ENCODE measurements at regions of chr20 and their contacts with region 1.

Region 1: DNA sequence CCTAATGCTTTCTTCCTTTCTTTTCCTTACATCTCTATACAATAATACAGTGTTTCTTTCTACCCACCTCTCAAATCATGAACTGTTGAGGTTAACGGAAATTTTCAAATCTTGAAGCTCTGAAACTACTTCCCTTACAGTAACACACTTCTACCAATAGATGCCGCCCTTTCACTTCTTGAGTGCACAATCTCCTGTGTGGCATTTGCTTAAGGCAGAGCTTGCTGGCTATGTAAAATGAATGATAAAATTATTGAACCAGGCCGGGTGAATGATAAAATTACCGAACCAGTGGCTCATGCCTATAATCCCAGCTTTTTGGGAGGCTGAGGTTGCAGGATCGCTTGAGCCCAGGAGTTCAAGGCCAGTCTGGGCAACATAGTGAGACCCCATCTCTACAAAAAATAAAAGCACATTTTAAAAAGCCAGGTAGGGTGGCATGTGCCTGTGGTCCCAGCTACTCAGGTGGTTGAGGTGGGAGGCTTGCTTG is 56.8 kb downstream of the KCNS1 start:
- DNase-seq: peak; percentile 37 to 77
- H3K4me3 ChIP-seq: no peak overlapping the region
- H3K27ac ChIP-seq: no peak overlapping the region
- H3K4me1 ChIP-seq: peaks cover 26% of the 10 kb centered on the region
- H3K27me3 ChIP-seq: no peaks in the 10 kb centered on the region
- CTCF ChIP-seq: peak; percentile 96

Region 2: GRCh38 chr20:44407402-44408184 is 636.5 kb before region 1 on chr20:
- CTCF ChIA-PET with region 1: no interaction called
- POLR2A ChIA-PET with region 1: interaction called, 10 read pairs
- intact Hi-C with region 1: no loop called
- DNase-seq: peak; percentile 96 to 99
- H3K4me3 ChIP-seq: peak overlapping the region; percentile 13; the same call in 1 of the 2 replicates
- H3K27ac ChIP-seq: peak overlapping the region; percentile 75
- H3K4me1 ChIP-seq: peaks cover 35% of the 10 kb centered on the region
- H3K27me3 ChIP-seq: no peaks in the 10 kb centered on the region
- CTCF ChIP-seq: no peak

Region 3: DNA sequence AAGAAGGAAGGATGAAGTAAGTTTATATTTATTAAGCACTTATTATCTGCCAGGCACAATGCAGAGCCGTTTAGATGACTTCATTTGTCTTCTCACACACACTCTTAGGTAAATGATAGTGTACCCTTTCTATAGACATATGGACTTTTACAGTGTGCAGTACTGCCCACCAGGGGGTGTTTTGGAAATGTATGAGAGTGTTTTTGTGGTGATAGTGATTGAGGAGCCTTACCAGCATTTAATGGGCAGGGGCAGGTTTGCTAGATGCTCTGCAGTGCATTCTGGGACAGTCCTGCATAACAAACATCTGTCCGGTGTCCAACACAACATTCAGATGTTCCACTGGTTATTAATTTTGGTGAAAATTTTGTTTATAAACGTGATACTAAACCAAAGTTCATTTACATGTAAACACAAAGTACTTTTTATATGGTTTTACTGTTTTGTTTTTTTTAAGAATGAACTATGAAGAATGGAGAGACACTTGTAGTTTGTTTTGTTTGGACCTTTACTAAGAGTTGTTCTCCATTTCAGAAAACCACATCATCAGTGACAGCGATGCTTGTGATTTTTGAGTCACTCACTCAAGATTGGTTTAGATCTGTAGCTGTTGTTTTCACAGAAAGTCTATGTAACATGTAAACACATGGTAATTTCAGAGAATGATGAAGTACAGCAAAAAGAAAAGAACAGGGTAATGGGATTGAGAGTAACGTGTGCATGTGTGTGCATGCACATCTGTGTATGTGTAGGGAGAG is 36.9 kb after region 1 on chr20:
- CTCF ChIA-PET with region 1: interaction called, 4 read pairs
- POLR2A ChIA-PET with region 1: interaction called, 25 read pairs
- intact Hi-C with region 1: no loop called
- DNase-seq: no peak
- H3K4me3 ChIP-seq: no peak overlapping the region
- H3K27ac ChIP-seq: no peak overlapping the region
- H3K4me1 ChIP-seq: no peaks in the 10 kb centered on the region
- H3K27me3 ChIP-seq: no peaks in the 10 kb centered on the region
- CTCF ChIP-seq: peak; percentile 68

Region 4: GRCh38 chr20:45229264-45230056 is 185.3 kb after region 1 on chr20:
- CTCF ChIA-PET with region 1: interaction called, 3 read pairs
- POLR2A ChIA-PET with region 1: no interaction called
- intact Hi-C with region 1: loop called (anchors 1 kb)
- DNase-seq: peak; percentile 66 to 69
- H3K4me3 ChIP-seq: peak overlapping the region; percentile 25; the same call in 1 of the 2 replicates
- H3K27ac ChIP-seq: no peak overlapping the region
- H3K4me1 ChIP-seq: peaks cover 6% of the 10 kb centered on the region
- H3K27me3 ChIP-seq: no peaks in the 10 kb centered on the region
- CTCF ChIP-seq: peak; percentile 96

Region 5: DNA sequence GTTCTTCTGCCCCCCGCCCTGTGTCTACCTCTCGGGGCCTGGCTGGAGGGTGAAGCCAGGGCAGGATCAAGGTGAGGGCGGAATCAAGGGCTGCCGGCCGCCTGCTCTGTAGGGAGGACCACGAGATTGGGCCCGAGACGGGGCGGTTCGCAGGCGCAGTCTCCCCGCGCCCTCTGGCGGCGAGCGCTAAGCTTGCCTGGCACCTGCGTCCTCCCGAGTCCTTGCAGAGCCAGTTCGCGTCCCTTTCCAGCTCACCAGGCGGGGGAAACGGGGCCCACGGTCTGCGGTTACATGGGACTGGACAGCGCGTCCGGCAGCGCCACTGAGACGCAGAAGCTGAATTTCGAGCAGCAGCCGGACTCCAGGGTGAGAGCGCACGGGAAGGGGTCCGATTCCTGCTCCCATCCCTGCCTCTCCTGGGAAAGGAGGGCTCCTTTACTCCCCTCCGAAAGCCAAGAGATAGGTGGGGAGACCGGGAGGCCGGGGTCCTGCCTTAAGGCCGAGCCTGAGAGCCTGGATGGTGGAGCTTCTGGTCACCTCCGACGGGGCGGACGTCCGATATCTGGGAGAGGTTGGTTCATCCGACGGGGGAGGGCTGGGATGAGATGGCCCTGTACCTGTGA is 267.6 kb after region 1 on chr20:
- CTCF ChIA-PET with region 1: no interaction called
- POLR2A ChIA-PET with region 1: no interaction called
- intact Hi-C with region 1: loop called (anchors 5 kb)
- DNase-seq: peak in 1 of 2 experiments; percentile 56
- H3K4me3 ChIP-seq: no peak overlapping the region
- H3K27ac ChIP-seq: no peak overlapping the region
- H3K4me1 ChIP-seq: no peaks in the 10 kb centered on the region
- H3K27me3 ChIP-seq: no peaks in the 10 kb centered on the region
- CTCF ChIP-seq: peak; percentile 75